ENCODE measurements at regions of chr17 and their contacts with region 1.

Region 1: DNA sequence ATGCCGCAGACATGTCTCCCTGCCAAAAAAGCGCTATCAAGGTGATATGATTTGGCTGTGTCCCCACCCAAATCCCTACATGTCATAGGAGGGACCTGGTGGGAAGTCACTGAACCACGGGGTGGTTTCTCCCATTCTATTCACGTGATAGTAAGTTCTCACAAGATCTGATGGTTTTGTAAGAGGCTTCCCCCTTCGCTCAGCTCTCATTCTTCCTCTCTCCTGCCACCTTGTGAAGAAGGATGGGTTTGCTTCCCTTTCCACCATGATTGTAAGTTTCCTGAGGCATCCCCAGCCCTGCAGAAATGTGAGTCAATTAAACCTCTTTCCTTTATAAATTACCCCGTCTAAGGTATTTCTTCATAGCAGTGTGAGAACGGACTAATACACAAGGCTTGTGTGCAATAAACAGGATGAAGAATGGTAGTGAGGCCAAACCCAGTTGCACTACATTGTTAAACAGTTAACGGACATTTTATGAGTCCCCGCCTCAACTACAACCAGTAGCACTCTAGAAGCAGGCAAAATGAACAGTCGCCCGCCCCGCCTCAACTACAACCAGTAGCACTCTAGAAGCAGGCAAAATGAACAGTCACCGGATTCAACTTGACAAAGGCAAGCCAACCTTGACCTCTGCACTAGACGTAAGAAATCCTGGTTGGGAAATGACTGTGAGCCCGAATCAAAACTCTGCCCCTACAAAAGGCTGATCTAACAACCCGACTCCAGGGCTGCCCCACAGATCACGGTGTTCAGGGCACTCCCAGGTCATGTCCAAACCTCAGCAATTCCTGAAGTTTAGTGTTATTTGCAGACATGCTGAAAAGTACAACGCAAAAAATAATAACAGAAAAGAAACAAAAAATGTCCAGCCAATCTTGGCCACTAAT is 26.3 kb downstream of the VPS53 start:
- DNase-seq: no peak
- ATAC-seq: no peak
- H3K4me3 ChIP-seq: no peak overlapping the region
- H3K27ac ChIP-seq: no peak overlapping the region
- H3K4me1 ChIP-seq: no peaks in the 10 kb centered on the region
- H3K27me3 ChIP-seq: no peaks in the 10 kb centered on the region
- CTCF ChIP-seq: peak; percentile 24 to 35 (median 26); a peak in 2 of 6 replicates
- POLR2A ChIP-seq: no peak
- RAD21 ChIP-seq: peak; percentile 59

Region 2: GRCh38 chr17:556431-556995 is 131.8 kb before region 1 on chr17:
- CTCF ChIA-PET with region 1: no interaction called
- POLR2A ChIA-PET with region 1: no interaction called
- RAD21 ChIA-PET with region 1: no interaction called
- intact Hi-C with region 1: loop called (anchors 2 kb)
- DNase-seq: no peak
- ATAC-seq: no peak
- H3K4me3 ChIP-seq: no peak overlapping the region
- H3K27ac ChIP-seq: no peak overlapping the region
- H3K4me1 ChIP-seq: peaks cover 0 to 20% of the 10 kb centered on the region in 2 experiments; a peak in 1 of 4 replicates
- H3K27me3 ChIP-seq: no peaks in the 10 kb centered on the region
- CTCF ChIP-seq: peak in 1 of 3 experiments; percentile 15; a peak in 1 of 6 replicates
- POLR2A ChIP-seq: no peak
- RAD21 ChIP-seq: peak; percentile 41; the same call in 1 of the 2 replicates